ENCODE measurements at regions of chr19 and their contacts with region 1.

Region 1: GRCh38 chr19:531009-531752 is 379 bp upstream of the CDC34 start:
- DNase-seq: peak in 41 of 42 donors; percentile 33 to 87 (median 74)

Region 2: GRCh38 chr19:480016-480855 is 50.9 kb before region 1 on chr19:
- intact Hi-C with region 1: no loop called
- DNase-seq: peak; percentile 60 to 91 (median 81)

Region 3: DNA sequence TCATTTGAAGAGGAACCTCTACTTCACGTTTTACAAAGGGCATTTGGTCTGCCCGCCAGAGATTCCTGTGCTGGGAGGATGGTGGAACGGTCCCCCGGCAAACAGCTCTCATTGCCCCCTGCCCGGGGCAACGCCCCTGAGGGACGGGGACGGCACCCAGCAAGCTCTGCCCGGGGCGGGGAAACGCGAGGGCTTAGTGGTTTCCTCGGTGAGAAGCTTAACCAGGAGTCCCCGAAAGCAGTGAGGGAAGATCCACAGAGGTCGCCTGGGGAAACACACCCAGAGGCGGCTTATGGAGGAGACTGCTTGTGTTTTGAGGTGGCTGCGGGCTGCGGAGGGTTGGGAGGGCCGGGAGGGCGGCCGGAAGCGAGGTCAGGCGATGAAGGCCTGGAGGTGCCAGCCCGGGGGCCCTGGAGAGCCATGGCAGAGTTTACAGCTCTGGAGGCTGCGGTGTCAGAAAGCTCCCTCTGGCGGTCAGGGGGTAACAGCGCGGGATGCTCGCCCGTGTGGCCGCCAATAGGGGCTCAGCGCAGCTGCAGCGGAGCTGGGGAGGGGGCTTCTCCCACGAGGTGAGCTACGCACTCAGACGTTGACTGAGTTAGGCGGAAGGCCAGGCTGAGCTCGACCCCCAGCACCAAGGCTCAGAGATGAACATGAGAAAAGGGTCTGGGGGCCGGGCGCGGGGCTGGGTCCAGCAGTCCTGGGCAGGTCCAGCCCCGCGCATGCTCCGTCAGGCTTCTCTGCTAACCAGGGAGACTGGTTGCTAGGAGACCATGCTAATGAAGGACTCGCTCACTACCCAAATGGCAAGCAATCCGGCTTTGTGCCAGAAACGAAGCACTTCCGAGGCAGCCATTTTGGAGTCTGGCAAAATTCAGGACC is 24.5 kb before region 1 on chr19:
- intact Hi-C with region 1: loop called (anchors 2 kb)
- DNase-seq: peak; percentile 94 to 100 (median 99)

Region 4: GRCh38 chr19:518603-519231 is 12.5 kb before region 1 on chr19:
- intact Hi-C with region 1: no loop called
- DNase-seq: no peak

Region 5: DNA sequence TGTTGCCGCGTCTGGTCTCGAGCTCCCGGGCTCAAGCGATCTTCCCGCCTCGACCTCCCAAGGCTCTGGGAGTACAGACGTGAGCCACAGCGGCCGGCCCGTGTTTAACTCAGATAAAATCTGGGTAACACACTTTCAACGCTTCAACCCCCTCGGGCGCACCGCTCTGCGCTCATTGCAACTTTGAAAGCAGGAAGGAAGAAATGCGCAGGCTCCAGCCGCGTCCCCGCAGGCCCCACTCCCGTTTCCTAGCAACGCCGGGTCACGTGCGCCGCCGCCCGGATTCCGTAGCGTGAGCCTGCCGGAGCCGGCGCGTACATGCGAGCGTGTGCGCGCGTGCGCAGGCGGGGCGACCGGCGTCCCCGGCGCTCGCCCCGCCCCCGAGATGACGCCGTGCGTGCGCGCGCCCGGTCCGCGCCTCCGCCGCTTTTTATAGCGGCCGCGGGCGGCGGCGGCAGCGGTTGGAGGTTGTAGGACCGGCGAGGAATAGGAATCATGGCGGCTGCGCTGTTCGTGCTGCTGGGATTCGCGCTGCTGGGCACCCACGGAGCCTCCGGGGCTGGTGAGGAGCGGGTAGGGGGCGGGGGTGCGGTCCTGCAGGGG is 41.1 kb after region 1 on chr19 and contains the start of gene BSG:
- intact Hi-C with region 1: loop called (anchors 5 kb)
- DNase-seq: peak; percentile 93 to 100 (median 98)

Measured in head of caudate nucleus (tissue), 42 donors.